H1 (cell line): ENCODE measurements at regions of chr18 and their contacts with region 1.

Region 1: DNA sequence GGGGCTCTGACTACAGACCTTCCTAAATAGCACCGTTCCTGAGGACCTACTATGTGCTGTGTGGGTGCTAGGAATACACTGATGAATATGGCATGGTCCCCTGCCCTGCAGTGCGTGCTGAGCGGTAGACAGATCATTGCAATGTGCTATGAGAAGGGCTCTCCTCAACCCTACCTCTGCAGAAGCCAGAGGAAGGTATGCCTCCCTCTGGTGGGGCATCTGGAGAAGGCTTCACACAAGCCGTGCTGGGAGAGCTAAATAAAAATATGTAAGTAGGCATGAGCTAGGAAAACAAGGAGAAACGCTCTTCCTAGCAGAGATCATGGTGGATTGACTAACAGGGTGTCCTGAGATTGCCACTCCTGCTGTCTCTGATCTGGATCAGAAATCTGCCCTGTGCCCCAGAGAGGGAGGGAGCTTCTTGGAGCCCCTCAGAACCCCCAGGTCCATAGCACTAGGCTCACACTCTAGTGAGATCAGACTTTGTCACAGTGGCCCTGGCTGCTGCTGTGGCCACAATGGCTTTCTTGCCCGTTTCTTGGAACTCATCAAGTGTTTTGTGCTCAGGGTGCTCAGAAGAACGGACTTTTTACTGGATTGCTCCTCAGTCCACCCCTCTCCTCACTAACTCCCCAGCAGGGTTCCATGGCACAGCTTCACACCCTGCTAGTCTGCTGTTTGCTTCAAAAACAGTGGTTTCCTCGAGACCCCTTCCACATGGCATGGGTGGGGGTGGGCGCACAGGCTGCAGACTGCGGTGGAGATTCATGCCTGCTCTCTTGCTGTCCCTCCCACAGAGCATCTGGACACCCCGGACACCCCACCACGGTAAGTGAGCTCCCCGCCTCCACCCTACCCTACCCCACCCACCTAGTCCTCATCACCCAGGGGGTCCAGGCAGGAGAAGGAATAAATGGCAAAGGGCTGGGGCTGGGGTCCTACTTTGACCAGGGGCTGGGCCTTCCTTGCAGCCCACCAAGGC is 14.2 kb downstream of the SIGLEC15 start:
- DNase-seq: peak in 1 of 2 experiments; percentile 52
- H3K4me3 ChIP-seq: no peak overlapping the region
- H3K27ac ChIP-seq: no peak overlapping the region
- H3K4me1 ChIP-seq: peaks cover 6 to 19% (median 10%) of the 10 kb centered on the region in 4 experiments
- H3K27me3 ChIP-seq: peaks cover 8 to 32% (median 25%) of the 10 kb centered on the region in 4 experiments
- CTCF ChIP-seq: peak; percentile 50 to 79 (median 78)
- EP300 ChIP-seq: no peak
- POLR2A ChIP-seq: no peak
- RAD21 ChIP-seq: peak; percentile 80 to 83

Region 2: GRCh38 chr18:45690975-45691815 is 148.5 kb before region 1 on chr18:
- CTCF ChIA-PET with region 1: interaction called, 10 read pairs
- POLR2A ChIA-PET with region 1: no interaction called
- DNase-seq: peak; percentile 46 to 90
- H3K4me3 ChIP-seq: no peak overlapping the region
- H3K27ac ChIP-seq: no peak overlapping the region
- H3K4me1 ChIP-seq: peaks cover 5 to 9% (median 7%) of the 10 kb centered on the region in 4 experiments
- H3K27me3 ChIP-seq: no peaks in the 10 kb centered on the region
- CTCF ChIP-seq: peak; percentile 81 to 96 (median 93)
- EP300 ChIP-seq: no peak
- POLR2A ChIP-seq: no peak
- RAD21 ChIP-seq: peak; percentile 98 to 99

Region 3: DNA sequence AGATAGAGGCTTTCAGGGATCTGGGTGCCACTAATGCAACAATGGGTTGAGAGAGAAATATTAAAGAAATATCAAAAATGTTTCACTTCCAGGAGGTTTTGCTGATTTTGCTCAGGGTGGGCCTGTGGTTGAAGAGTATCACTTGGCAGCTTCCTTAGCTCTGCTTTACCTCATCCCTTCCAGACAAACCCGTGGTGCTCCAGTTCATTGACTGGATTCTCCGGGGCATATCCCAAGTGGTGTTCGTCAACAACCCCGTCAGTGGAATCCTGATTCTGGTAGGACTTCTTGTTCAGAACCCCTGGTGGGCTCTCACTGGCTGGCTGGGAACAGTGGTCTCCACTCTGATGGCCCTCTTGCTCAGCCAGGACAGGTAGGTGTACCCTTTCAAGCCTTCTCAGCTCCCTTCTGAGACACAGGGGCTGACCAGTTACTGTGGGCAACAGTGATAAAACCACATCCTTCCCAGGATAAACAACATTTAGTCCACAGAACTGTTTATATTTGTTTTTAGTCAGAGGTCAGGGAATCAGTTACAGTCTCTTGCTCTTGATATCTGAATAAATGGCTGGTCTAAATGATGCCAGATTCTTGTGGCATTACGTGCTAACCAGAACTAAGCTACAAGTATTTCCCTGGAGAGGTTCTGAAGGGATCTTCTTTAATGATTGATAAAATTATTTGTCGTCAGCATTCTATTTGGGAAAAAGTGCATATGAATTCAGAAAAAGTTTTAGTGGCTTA is 108.7 kb before region 1 on chr18:
- CTCF ChIA-PET with region 1: interaction called, 23 read pairs
- POLR2A ChIA-PET with region 1: no interaction called
- DNase-seq: no peak
- H3K4me3 ChIP-seq: no peak overlapping the region
- H3K27ac ChIP-seq: no peak overlapping the region
- H3K4me1 ChIP-seq: no peaks in the 10 kb centered on the region
- H3K27me3 ChIP-seq: no peaks in the 10 kb centered on the region
- CTCF ChIP-seq: no peak
- EP300 ChIP-seq: no peak
- POLR2A ChIP-seq: no peak
- RAD21 ChIP-seq: no peak

Region 4: GRCh38 chr18:45802608-45803492 is 36.9 kb before region 1 on chr18:
- CTCF ChIA-PET with region 1: interaction called, 32 read pairs
- POLR2A ChIA-PET with region 1: no interaction called
- DNase-seq: no peak
- H3K4me3 ChIP-seq: no peak overlapping the region
- H3K27ac ChIP-seq: no peak overlapping the region
- H3K4me1 ChIP-seq: peaks cover 0 to 8% (median 4%) of the 10 kb centered on the region in 4 experiments; a peak in 6 of 7 replicates
- H3K27me3 ChIP-seq: no peaks in the 10 kb centered on the region
- CTCF ChIP-seq: no peak
- EP300 ChIP-seq: no peak
- POLR2A ChIP-seq: no peak
- RAD21 ChIP-seq: no peak

Region 5: DNA sequence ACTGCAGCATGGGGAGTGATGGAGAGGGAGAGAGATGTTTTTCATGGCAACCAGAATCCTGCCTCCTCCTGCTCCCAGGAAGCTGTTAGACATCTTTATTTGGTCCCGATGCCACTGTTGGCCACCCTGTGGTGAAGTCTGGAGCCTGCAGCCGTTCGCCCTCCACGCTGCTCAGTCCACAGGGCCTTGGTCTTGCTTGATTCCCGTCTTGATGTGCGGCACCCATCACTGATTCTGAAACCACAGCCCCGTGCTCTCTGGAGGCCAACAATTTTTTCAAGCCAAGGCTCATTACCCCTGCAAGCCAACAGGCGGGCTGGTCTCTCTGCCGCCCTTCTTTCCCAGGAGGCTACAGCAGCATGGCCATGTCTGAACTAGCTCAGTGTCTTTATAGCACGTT is 10.3 kb after region 1 on chr18:
- CTCF ChIA-PET with region 1: interaction called, 33 read pairs
- POLR2A ChIA-PET with region 1: interaction called, 3 read pairs
- DNase-seq: peak in 1 of 2 experiments; percentile 56
- H3K4me3 ChIP-seq: no peak overlapping the region
- H3K27ac ChIP-seq: no peak overlapping the region
- H3K4me1 ChIP-seq: no peaks in the 10 kb centered on the region
- H3K27me3 ChIP-seq: no peaks in the 10 kb centered on the region
- CTCF ChIP-seq: peak; percentile 61 to 76 (median 75)
- EP300 ChIP-seq: no peak
- POLR2A ChIP-seq: no peak
- RAD21 ChIP-seq: peak; percentile 63 to 67

Region 6: DNA sequence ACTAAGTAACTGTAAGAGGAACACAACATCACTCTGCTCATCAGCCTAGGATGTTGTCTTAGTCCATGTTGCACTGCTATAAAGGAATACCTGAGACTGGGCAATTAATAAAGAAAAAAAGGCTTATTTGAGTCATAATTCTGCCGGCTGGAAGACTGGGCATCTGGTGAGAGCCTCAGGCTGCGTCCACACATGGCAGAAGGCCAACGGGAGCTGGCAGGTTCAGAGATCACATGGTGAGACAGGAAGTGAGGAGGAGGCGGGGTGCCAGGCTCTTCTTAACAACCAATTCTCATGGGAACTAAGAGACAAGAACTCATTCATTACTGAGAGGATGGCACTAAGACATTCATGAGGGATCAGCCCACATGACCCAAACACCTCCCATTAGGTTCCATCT is 80.7 kb after region 1 on chr18:
- CTCF ChIA-PET with region 1: no interaction called
- POLR2A ChIA-PET with region 1: no interaction called
- DNase-seq: no peak
- H3K4me3 ChIP-seq: no peak overlapping the region
- H3K27ac ChIP-seq: no peak overlapping the region
- H3K4me1 ChIP-seq: no peaks in the 10 kb centered on the region
- H3K27me3 ChIP-seq: no peaks in the 10 kb centered on the region
- CTCF ChIP-seq: no peak
- EP300 ChIP-seq: no peak
- POLR2A ChIP-seq: no peak
- RAD21 ChIP-seq: no peak

Region 7: DNA sequence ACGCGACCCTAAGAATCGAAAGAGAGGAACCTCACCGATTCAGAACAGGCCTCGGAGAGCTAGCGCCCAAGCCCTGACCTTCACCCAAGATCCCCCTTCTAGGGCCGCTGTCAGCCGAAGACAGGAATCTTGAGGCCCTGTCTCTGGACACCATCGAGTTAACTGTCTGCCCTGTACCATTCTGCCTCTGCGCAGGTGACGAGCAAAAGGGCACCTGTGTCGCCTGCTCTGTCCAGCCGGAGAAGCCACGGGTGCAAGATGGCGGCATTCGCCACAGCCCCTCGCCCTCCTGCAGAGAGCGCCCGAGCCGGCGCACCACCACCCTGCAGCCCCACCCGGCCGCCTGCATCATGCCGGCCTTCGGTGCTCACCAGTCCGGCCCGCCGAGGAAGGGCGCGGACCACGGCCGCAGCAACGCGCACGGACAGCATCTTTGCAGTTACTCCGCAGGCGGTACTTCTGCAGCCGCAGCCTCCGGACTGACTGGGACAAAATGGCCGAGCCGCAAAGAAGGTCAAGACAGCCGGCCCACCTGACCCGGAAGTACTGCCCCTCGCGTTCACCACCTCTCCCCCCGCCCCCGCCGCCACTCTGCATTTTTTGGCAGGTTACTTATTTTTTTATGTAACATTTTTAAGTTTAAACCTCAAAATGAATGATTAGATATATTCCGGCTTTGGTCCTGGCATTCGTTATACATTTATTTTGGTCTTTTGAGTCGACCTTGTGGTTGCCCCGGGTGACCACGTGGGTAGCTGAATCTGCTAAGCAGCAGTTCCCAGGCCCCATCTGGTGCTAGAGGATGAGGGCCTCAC is 258.3 kb after region 1 on chr18 and contains the start of gene ATP5F1A:
- CTCF ChIA-PET with region 1: no interaction called
- POLR2A ChIA-PET with region 1: no interaction called
- DNase-seq: peak in 1 of 2 experiments; percentile 88
- H3K4me3 ChIP-seq: peak within 1 kb of the TSS; percentile 91 to 99 (median 98)
- H3K27ac ChIP-seq: peak within 1 kb of the TSS; percentile 92
- H3K4me1 ChIP-seq: peaks cover 0 to 3% (median 2%) of the 10 kb centered on the region in 4 experiments; a peak in 6 of 7 replicates
- H3K27me3 ChIP-seq: no peaks in the 10 kb centered on the region
- CTCF ChIP-seq: no peak
- EP300 ChIP-seq: no peak
- POLR2A ChIP-seq: peak; percentile 81 to 91
- RAD21 ChIP-seq: no peak; a peak in 1 of 4 replicates
- total RNA-seq, gene ATP5F1A: 669 and 685 TPM in 2 replicates